ENCODE measurements at regions of chr6 and their contacts with region 1.

Region 1: GRCh38 chr6:28838634-28839442 is 84.9 kb downstream of the TRIM27 start:
- DNase-seq: peak; percentile 93
- ATAC-seq: peak; percentile 86
- H3K4me3 Mint-ChIP-seq: peak overlapping the region; percentile 94
- H3K27ac Mint-ChIP-seq: peak overlapping the region; percentile 84
- H3K4me1 Mint-ChIP-seq: peaks cover 13% of the 10 kb centered on the region
- H3K27me3 Mint-ChIP-seq: peaks cover 27% of the 10 kb centered on the region
- CTCF ChIP-seq: peak; percentile 65

Region 2: DNA sequence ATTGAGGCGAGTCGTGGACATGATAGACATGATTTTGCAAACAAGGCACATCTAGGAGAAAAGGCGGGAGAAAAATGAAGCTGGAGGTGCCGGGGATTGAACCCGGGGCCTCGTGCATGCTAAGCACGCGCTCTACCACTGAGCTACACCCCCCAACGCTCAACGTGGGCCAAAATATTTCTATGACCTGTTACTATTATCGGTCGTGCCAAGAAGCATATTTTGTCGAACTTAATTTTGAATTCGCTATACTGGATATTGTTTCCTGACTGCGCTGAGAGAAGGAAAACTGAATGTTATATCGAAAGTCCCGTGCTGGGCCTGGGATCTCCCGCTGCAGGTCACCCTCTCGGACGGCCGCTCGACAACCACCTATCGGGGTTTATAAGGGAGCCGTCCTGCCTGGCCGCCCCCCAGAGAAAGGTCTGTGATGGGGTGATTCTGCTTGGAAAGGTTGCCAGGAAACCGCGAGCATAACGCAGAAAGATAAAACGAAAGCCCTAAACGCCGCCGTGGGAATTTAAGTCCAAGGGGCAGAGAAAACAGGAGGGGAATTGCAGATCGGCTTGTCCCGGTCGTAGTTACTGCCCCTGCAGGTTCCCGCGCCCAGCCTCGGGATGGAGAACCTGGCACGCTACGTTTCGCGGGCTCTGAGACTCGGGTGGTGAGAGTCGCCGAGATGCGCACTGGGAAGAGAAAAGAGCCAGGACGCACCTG is 24.9 kb after region 1 on chr6:
- CTCF ChIA-PET with region 1: interaction called, 33 read pairs
- POLR2A ChIA-PET with region 1: interaction called, 8 read pairs
- intact Hi-C with region 1: loop called (anchors 2 kb)
- DNase-seq: peak; percentile 89
- ATAC-seq: peak; percentile 54
- H3K4me3 Mint-ChIP-seq: peak overlapping the region; percentile 89
- H3K27ac Mint-ChIP-seq: peak overlapping the region; percentile 84
- H3K4me1 Mint-ChIP-seq: peaks cover 30% of the 10 kb centered on the region
- H3K27me3 Mint-ChIP-seq: peaks cover 3% of the 10 kb centered on the region
- CTCF ChIP-seq: no peak

Region 3: DNA sequence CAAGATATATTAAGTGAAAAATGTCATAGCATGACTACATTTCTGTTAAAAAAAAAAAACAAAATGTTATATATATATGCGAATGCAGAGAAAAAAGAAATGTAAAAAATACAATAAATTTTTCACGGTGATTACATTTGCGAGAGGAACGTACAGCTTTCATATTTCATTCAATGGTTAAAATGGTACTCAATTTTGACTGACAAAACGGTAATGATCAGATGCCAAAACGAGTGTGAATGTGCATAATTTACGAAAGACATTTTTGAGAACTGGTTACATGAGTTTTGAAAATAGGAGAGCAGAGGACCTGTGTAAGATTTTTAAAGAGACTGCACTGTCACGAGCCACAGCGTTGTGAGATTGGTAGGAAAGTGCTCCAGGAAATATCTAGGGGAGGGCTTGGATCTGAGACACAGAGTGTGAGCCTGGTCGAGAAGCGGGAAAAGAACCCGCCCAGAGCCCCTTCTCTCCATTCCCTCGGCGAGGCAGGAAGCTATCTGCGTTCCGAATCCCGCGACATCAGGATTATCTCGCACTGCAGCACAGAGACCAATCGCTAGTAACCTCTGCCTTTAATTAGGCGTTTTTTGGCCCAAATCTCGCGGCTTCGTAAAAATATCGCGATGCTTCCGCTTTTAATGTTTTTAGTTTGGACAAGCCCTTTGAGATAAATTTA is 56.4 kb after region 1 on chr6:
- CTCF ChIA-PET with region 1: interaction called, 9 read pairs
- POLR2A ChIA-PET with region 1: interaction called, 3 read pairs
- intact Hi-C with region 1: loop called (anchors 5 kb)
- DNase-seq: peak; percentile 98
- ATAC-seq: peak; percentile 79
- H3K4me3 Mint-ChIP-seq: peak overlapping the region; percentile 96
- H3K27ac Mint-ChIP-seq: peak overlapping the region; percentile 95
- H3K4me1 Mint-ChIP-seq: peaks cover 5% of the 10 kb centered on the region
- H3K27me3 Mint-ChIP-seq: peaks cover 2% of the 10 kb centered on the region
- CTCF ChIP-seq: no peak

Region 4: DNA sequence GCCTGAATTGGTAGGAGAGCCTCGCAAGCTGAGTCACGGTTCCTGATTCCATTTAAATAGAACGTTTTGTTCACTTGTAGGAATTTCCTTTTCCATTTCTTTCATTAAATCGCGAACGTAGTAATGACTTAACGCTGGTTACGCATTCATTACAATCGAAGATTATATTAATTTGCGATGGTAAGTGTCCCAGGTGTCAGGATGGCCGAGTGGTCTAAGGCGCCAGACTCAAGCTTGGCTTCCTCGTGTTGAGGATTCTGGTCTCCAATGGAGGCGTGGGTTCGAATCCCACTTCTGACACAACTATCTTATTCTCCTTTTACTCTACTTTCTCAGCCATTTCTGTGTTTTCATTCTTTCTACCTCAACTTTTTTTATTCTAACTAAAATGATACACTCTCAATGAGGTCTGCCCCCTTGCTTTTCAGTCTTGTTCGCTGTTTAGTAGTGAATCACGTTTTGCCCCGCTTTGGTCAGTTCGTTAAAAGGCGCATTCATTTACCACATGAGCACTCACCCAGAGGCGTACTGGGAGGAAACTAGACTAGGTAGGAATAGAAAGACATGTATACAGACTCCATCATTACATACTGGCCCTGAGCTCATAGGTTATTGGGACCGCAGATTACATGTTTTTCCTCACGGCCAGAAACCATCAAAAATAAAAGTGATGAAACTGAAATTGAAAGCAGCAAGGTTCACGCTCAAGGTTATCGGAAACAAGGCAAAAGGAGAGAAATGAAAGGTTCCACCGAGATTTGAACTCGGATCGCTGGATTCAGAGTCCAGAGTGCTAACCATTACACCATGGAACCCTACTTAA is 102.2 kb after region 1 on chr6:
- CTCF ChIA-PET with region 1: interaction called, 7 read pairs
- POLR2A ChIA-PET with region 1: interaction called, 5 read pairs
- intact Hi-C with region 1: loop called (anchors 2 kb)
- DNase-seq: peak; percentile 89
- ATAC-seq: peak; percentile 69
- H3K4me3 Mint-ChIP-seq: peak overlapping the region; percentile 83
- H3K27ac Mint-ChIP-seq: peak overlapping the region; percentile 99
- H3K4me1 Mint-ChIP-seq: peaks cover 40% of the 10 kb centered on the region
- H3K27me3 Mint-ChIP-seq: peaks cover 2% of the 10 kb centered on the region
- CTCF ChIP-seq: no peak

Region 5: GRCh38 chr6:29011276-29011734 is 172.5 kb after region 1 on chr6:
- CTCF ChIA-PET with region 1: interaction called, 58 read pairs
- POLR2A ChIA-PET with region 1: interaction called, 8 read pairs
- intact Hi-C with region 1: loop called (anchors 2 kb)
- DNase-seq: peak; percentile 61
- ATAC-seq: no peak
- H3K4me3 Mint-ChIP-seq: peak overlapping the region; percentile 71
- H3K27ac Mint-ChIP-seq: no peak overlapping the region
- H3K4me1 Mint-ChIP-seq: peaks cover 7% of the 10 kb centered on the region
- H3K27me3 Mint-ChIP-seq: peaks cover 25% of the 10 kb centered on the region
- CTCF ChIP-seq: no peak

Measured in activated CD8-positive, alpha-beta T cell treated with anti-CD3 and anti-CD28 coated beads for 36 hours (primary cell).